BJ (cell line): ENCODE measurements at regions of chr3 and their contacts with region 1.

Region 1: DNA sequence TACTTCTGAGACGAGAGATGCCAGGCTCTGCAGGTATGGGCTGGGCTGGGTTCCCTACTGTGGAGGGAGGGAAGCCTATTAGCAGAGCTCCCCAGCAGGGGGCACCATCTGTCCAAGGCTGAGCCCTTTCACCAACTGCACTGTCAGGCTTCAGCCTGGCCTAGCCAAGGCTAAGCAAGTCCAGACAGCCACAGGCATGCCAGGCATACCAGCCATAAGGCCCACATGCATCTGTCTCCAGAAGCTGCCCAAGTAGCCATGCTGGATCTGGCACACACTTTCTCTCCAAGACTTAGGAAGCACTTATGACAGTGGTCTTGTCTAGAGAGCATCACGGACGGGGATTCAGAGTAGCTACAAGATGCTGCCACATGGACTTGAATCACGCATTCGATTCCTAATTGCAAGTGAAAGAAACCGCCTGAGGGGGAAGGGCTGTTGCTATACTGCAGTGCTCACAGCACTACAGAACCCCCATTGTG is 28.3 kb downstream of the RUVBL1 start:
- DNase-seq: peak; percentile 34
- H3K4me3 ChIP-seq: no peak overlapping the region
- H3K27me3 ChIP-seq: no peaks in the 10 kb centered on the region
- CTCF ChIP-seq: peak; percentile 88

Region 2: DNA sequence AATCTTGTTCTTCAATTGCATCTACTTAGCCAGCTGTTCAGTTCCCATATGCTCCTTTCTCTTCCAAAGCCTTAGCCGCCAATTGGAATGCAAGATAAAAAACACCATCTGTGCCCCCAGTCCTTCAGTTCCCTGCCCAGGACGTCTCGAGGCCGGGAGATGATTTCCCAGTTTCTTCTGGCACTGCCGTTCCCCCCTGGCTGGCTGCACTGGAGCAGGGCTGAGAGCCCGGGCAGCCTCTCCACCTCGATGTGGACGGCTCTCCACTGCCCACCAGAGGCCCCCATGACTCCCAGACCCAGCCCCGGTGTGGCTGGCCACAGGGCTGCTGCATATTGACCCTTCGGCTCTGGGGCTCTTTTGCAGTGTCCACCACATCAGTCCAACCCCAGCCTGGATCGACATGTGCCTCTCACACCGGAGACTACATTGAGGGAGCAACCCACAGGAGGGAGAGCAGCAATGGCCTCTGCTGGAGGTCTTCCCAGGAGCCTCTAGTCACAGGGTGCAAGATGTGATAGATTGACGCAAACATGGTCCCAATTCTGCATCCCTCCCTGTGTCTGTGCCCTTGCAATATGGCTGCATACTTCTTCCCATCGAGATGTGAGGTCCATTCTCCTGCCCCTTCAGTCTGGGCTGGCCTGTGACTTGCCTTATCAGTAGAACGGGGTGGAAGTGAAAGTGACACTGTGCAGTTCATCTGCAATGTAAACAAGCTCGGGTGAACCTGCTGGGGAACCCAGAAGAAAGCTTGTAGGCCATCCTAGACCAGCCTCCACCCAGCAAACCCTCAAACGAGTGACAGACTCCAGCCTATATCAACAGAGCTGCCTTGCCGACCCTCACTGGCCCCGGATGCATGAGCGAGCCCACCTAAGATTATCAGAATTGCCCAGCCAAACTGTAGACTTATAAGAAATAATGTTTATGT is 755.1 kb before region 1 on chr3:
- CTCF ChIA-PET with region 1: no interaction called
- POLR2A ChIA-PET with region 1: no interaction called
- DNase-seq: no peak
- H3K4me3 ChIP-seq: no peak overlapping the region
- H3K27me3 ChIP-seq: peaks cover 15% of the 10 kb centered on the region
- CTCF ChIP-seq: no peak

Region 3: DNA sequence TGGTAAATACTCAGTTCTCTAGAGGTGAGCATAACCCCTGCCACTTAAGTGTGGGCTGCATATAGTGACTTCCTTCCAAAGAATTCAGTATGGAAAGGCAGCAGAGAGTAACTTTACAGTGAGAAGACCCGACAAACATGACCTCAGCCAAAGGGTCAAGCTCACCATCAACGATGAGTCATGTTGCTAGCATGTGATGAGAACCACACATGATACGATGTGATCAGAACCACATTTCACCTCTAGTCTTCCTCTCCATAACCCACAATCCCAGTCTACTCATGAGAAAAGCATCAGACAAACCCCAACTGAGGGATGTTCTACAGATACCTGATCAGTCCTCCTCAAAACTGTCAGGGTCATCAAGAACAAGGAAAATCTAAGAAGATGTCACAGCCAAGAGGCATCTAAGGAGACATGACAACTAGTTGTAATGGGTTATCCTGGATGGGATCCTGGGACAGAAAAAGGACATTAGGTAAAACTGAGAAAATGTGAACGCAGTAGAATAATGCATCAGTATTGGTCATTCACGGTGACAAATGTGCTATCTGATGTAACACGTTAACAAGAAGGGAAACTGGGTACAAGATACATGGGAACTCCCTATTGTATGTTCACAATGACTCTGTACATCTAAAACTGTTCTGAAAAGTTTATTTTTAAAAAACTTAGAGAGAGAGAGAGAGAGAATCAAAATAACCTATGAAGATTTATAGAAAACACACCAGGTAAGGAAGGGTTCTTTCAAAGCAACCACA is 14.8 kb before region 1 on chr3:
- CTCF ChIA-PET with region 1: interaction called, 45 read pairs
- POLR2A ChIA-PET with region 1: interaction called, 4 read pairs
- DNase-seq: peak; percentile 71
- H3K4me3 ChIP-seq: no peak overlapping the region
- H3K27me3 ChIP-seq: no peaks in the 10 kb centered on the region
- CTCF ChIP-seq: no peak

Region 4: GRCh38 chr3:128123538-128124368 is 28.5 kb after region 1 on chr3 and contains the start of gene RUVBL1:
- CTCF ChIA-PET with region 1: interaction called, 17 read pairs
- POLR2A ChIA-PET with region 1: no interaction called
- DNase-seq: peak; percentile 86
- H3K4me3 ChIP-seq: peak within 1 kb of the TSS; percentile 97
- H3K27me3 ChIP-seq: no peaks in the 10 kb centered on the region
- CTCF ChIP-seq: no peak
- polyA plus RNA-seq, gene RUVBL1: 63.7 and 67.6 TPM in 2 replicates

Region 5: DNA sequence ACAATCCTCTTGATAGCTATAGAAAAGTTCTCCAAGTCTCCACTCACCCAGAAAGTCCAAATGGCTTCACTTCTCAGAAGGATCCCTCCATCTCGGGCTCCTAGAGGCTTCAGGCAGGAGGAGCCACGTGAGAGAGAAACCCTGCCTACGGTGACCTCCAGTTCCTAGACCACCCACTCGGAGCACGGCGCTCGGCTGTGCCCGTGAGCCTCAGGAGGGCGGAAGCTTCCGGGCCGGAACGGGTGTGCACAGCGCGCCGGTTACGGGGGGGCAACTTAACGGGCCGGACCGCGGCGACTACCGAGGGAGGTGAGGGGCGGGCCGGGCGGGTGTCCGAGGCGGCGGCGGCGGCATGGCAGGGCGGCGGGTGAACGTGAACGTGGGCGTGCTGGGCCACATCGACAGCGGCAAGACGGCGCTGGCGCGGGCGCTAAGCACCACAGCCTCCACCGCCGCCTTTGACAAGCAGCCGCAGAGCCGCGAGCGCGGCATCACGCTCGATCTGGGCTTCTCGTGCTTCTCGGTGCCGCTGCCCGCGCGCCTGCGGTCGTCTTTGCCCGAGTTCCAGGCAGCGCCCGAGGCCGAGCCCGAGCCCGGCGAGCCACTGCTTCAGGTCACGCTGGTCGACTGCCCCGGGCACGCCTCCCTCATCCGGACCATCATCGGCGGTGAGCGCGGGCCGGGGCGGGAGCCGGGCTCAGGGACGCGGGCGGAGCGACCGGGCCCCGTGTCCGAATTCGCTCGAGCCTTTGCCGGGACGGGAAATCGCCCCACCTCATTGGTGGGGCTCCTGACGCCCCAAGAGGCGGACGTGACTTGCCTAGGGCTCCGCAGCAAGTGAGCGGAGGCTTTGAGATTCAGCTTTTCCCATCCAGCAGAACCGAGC is 58.1 kb after region 1 on chr3 and contains the start of gene EEFSEC:
- CTCF ChIA-PET with region 1: interaction called, 10 read pairs
- POLR2A ChIA-PET with region 1: no interaction called
- DNase-seq: peak; percentile 29
- H3K4me3 ChIP-seq: peak within 1 kb of the TSS; percentile 93
- H3K27me3 ChIP-seq: no peaks in the 10 kb centered on the region
- CTCF ChIP-seq: no peak
- polyA plus RNA-seq, gene EEFSEC: 10.9 and 16.3 TPM in 2 replicates

Region 6: DNA sequence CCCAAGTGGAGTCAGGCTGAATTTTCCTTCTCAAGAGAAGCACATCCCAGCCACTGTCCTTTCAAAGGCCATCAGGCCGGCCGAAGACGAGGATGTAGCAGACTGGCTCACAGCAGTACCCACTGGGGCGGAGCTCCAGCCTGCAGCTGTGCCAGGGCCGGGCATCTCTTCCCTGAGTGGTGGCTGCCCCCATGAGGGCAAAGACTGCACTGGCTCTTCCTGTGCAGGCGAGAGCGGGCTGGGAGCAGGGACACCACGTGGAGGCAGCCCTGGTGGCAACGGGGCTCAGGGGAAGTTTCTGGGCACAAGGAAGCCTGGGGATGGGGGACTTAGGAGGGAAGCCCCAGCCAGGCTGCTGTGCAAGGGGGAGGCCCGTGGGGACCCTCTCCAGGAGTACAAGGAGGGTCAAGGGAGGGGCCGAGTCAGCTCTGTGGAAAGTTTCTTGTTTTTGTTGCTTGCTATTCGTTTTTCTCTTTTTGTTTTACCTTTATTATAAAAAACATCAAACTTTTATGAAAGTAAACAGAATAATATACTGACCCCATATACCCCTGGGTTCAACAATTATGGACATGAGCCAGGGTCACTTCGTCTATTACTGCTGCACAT is 489.3 kb after region 1 on chr3:
- CTCF ChIA-PET with region 1: interaction called, 14 read pairs
- POLR2A ChIA-PET with region 1: no interaction called
- DNase-seq: no peak
- H3K4me3 ChIP-seq: no peak overlapping the region
- H3K27me3 ChIP-seq: peaks cover 2% of the 10 kb centered on the region; the same call in 1 of the 2 replicates
- CTCF ChIP-seq: peak; percentile 85